MCF 10A (cell line): ENCODE measurements at regions of chr14 and their contacts with region 1.

Region 1: DNA sequence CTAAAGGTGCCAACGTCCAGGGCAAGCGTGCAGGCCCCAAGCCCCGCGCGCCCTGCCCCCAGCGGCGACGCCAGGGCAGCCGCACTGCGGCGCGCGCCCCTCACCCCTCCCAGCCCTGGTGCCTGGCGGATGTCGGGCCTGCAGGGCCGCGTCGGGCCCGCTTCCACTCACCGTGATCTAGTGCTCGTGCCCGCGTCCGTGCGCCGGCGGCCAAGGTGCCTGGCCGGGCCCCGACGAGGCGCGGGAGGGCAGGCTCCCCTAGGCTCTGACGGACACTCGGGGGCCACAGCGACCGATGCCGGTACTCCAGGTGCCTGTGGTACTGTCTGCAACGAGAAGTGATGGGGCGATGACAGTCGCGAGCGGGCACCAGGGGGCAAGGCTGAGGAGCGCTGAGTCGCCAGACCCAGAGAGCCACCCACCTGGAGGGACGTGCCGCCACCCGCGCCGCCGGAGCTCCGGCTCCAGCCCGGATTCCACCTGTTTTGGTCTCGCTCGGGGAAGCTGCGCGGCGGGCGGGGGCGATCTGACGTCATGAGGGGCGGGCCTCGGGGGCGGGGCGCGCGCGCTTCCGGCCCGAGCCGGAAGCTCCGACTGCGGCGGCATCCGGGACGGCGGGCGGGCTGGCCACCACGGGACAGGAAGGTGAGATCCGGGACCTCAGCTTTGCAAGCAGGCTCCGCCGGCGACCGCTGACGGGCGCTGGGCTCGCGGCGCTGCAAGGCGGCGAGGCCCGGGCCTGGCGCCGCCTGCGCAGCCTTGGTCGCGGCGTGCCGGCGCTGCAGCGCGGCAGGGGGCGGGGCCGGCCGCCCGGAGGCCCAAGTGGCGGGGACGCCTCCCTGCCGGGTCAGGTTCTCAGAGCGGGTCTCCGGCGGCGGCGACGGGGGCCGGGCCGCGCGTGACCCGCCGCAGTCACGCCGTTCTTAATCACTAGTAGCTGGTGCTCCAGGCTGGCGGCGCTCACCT is at the starts of genes LYSET and MOAP1:
- DNase-seq: peak; percentile 79
- H3K4me3 Mint-ChIP-seq: peak within 1 kb of the TSS; percentile 88
- H3K27ac Mint-ChIP-seq: peak within 1 kb of the TSS; percentile 84
- H3K4me1 Mint-ChIP-seq: peaks cover 15% of the 10 kb centered on the region
- H3K27me3 Mint-ChIP-seq: no peaks in the 10 kb centered on the region
- CTCF ChIP-seq: no peak
- total RNA-seq, gene LYSET: 14.3 and 15.4 TPM in 2 replicates
- total RNA-seq, gene MOAP1: 17.5 and 22.1 TPM in 2 replicates

Region 2: GRCh38 chr14:93173943-93174395 is 10.7 kb before region 1 on chr14:
- CTCF ChIA-PET with region 1: interaction called, 11 read pairs
- POLR2A ChIA-PET with region 1: interaction called, 13 read pairs
- intact Hi-C with region 1: no loop called
- DNase-seq: no peak
- H3K4me3 Mint-ChIP-seq: no peak overlapping the region
- H3K27ac Mint-ChIP-seq: no peak overlapping the region
- H3K4me1 Mint-ChIP-seq: no peaks in the 10 kb centered on the region
- H3K27me3 Mint-ChIP-seq: no peaks in the 10 kb centered on the region
- CTCF ChIP-seq: no peak

Region 3: GRCh38 chr14:93195316-93195999 is 10.8 kb after region 1 on chr14:
- CTCF ChIA-PET with region 1: interaction called, 6 read pairs
- POLR2A ChIA-PET with region 1: interaction called, 17 read pairs
- intact Hi-C with region 1: no loop called
- DNase-seq: no peak
- H3K4me3 Mint-ChIP-seq: no peak overlapping the region
- H3K27ac Mint-ChIP-seq: no peak overlapping the region
- H3K4me1 Mint-ChIP-seq: no peaks in the 10 kb centered on the region
- H3K27me3 Mint-ChIP-seq: no peaks in the 10 kb centered on the region
- CTCF ChIP-seq: no peak

Region 4: GRCh38 chr14:93285044-93285443 is 100.4 kb after region 1 on chr14:
- CTCF ChIA-PET with region 1: no interaction called
- POLR2A ChIA-PET with region 1: no interaction called
- intact Hi-C with region 1: no loop called
- DNase-seq: no peak
- H3K4me3 Mint-ChIP-seq: no peak overlapping the region
- H3K27ac Mint-ChIP-seq: no peak overlapping the region
- H3K4me1 Mint-ChIP-seq: no peaks in the 10 kb centered on the region
- H3K27me3 Mint-ChIP-seq: no peaks in the 10 kb centered on the region
- CTCF ChIP-seq: no peak

Region 5: GRCh38 chr14:93295541-93296220 is 111.0 kb after region 1 on chr14:
- CTCF ChIA-PET with region 1: no interaction called
- POLR2A ChIA-PET with region 1: no interaction called
- intact Hi-C with region 1: no loop called
- DNase-seq: no peak
- H3K4me3 Mint-ChIP-seq: no peak overlapping the region
- H3K27ac Mint-ChIP-seq: no peak overlapping the region
- H3K4me1 Mint-ChIP-seq: no peaks in the 10 kb centered on the region
- H3K27me3 Mint-ChIP-seq: no peaks in the 10 kb centered on the region
- CTCF ChIP-seq: no peak

Region 6: DNA sequence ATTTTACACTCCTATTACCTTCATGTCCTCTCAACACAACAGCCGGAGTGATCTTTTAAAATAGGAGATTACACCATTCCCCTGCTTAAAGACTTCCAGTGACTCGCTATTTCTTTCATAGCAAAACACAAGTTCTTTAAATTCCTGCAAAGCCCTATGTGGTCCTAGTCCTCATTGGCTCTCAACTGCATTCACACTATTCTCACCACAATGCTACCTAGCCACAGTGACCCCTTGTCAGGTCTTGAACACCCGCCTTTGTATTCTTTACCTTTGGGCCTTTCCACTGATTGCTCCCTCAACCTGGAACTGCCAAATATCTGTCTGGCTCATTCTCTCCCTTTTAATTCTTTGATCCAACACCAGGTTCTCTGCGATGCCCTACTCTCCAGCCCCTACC is 443.4 kb after region 1 on chr14:
- CTCF ChIA-PET with region 1: no interaction called
- POLR2A ChIA-PET with region 1: no interaction called
- intact Hi-C with region 1: no loop called
- DNase-seq: no peak
- H3K4me3 Mint-ChIP-seq: no peak overlapping the region
- H3K27ac Mint-ChIP-seq: no peak overlapping the region
- H3K4me1 Mint-ChIP-seq: no peaks in the 10 kb centered on the region
- H3K27me3 Mint-ChIP-seq: peaks cover 83% of the 10 kb centered on the region
- CTCF ChIP-seq: no peak

Region 7: DNA sequence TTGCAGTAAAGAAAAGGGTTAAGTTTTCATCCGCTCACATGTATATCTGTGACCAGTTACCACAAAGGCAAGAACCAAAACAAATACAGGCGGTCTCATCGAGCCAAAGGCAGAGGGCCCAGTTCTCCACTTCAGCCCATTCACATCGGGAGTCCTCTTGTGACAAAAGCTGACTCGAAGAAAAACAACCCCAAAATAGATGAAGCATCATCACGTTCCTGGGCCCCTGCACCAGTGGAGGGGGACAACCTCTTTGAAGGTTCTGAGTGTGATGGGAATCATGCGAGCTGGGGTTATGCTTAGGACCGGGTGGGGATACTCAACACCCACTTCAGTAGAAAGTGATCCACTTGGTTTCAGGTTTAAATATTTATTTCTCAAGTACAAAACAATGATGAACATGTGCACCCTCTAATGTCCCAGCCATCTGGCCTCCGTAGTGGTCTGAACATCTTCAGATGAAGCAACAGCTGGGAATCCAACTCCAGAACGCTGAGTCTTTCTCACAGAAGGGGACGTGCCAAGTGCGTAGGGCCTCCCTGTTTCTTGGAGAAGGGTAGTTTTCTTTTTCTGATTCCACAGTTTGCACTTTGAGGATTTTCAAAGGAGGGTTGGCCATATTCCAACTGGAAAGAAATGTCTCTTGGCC is 1576.8 kb after region 1 on chr14:
- CTCF ChIA-PET with region 1: no interaction called
- POLR2A ChIA-PET with region 1: no interaction called
- intact Hi-C with region 1: no loop called
- DNase-seq: no peak
- H3K4me3 Mint-ChIP-seq: no peak overlapping the region
- H3K27ac Mint-ChIP-seq: no peak overlapping the region
- H3K4me1 Mint-ChIP-seq: no peaks in the 10 kb centered on the region
- H3K27me3 Mint-ChIP-seq: peaks cover 26% of the 10 kb centered on the region
- CTCF ChIP-seq: no peak